PC-3 (cell line): ENCODE measurements at regions of chr17 and their contacts with region 1.

Region 1: DNA sequence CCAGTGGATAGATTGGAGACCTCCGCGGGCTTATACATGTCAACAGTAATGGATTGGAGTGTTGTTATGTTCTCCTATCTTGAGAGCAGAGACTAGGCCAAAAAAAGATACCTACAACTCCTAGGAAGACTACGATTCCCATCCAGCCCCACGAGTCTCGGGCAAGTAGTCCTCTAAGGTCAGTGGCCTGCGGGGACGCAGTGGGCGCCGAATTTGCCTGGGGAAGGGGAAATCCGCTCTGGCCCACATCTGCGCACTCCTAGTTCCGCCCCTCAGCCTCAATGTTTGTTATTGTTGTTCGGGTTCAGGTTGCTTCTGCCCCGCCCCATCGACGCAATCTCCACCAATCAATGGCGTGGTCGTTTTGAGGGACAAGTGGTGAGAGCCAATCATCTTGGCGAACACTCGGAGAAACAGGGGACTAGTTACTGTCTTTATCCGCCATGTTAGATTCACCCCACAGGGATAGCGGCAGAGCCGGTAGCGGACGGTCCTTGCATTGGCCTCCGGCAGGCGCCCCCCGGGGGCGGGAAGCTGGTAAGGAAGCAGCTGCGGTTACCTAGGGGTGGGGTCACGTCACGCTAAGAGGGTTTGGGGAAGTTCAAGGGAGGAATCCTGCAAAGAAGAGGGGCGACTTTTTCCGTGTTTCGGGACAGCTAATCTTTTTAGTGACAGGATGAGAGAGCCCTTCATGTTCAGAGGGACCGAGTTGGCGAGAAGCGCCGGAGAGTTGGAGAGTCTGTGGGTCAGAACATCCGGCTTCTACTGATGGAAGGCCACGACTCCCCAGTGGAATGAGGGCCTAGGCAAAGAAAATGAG is at the start of gene NBR1:
- DNase-seq: peak; percentile 93
- ATAC-seq: peak; percentile 77
- H3K4me3 ChIP-seq: peak within 1 kb of the TSS; percentile 90
- H3K27ac ChIP-seq: peak within 1 kb of the TSS; percentile 73
- H3K4me1 ChIP-seq: peaks cover 11% of the 10 kb centered on the region
- H3K27me3 ChIP-seq: no peaks in the 10 kb centered on the region
- CTCF ChIP-seq: no peak
- total RNA-seq, gene NBR1: 24.1 and 30.0 TPM in 2 replicates

Region 2: DNA sequence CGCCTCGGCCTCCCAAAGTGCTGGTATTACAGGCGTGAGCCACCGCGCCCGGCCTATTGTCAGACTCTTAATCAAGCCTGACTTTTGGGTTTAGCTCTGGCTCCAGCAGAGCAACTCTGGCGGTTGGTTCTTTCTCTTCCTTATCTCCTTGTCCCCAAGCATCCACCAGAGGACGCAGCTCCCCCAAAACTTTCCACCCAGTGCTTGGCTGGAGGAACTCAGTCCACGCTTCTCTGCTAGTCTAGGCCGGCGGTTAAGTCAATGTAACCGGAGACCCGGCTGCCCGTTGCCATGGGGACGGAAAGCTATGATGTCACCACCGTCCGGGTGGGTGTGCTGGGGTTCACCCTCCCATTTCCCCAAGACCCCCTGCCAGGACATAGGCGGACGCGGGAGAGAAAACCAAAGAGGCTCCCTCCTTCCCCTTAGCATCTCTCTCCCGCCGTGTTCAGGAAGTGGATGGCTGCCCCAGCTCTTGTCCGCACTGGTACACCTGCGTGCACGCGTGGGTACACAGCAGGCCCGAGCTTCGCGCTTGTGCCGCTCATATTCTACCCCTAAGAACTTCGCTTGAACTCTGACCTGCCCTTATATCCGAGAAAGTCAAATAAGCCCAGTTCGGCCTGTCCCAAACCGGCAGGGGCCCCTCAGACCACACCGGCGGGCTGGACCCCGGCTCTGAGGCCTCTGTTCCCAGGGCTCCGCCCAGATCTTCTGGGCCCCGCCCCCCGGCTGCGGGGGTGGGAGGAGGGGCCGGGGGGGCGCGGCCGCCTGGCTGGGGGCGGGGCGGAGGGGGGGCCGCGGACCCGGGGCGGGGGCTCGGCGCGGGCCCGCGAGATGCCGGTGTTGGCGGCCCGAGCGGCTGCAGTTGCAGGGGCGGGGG is 146.3 kb before region 1 on chr17 and contains the start of gene RND2:
- CTCF ChIA-PET with region 1: interaction called, 4 read pairs
- POLR2A ChIA-PET with region 1: interaction called, 5 read pairs
- intact Hi-C with region 1: loop called (anchors 2 kb)
- DNase-seq: peak; percentile 85
- ATAC-seq: peak; percentile 65
- H3K4me3 ChIP-seq: peak within 1 kb of the TSS; percentile 61
- H3K27ac ChIP-seq: no peak within 1 kb of the TSS
- H3K4me1 ChIP-seq: peaks cover 5% of the 10 kb centered on the region
- H3K27me3 ChIP-seq: no peaks in the 10 kb centered on the region
- CTCF ChIP-seq: peak; percentile 63
- total RNA-seq, gene RND2: 0.12 and 0.29 TPM in 2 replicates

Region 3: DNA sequence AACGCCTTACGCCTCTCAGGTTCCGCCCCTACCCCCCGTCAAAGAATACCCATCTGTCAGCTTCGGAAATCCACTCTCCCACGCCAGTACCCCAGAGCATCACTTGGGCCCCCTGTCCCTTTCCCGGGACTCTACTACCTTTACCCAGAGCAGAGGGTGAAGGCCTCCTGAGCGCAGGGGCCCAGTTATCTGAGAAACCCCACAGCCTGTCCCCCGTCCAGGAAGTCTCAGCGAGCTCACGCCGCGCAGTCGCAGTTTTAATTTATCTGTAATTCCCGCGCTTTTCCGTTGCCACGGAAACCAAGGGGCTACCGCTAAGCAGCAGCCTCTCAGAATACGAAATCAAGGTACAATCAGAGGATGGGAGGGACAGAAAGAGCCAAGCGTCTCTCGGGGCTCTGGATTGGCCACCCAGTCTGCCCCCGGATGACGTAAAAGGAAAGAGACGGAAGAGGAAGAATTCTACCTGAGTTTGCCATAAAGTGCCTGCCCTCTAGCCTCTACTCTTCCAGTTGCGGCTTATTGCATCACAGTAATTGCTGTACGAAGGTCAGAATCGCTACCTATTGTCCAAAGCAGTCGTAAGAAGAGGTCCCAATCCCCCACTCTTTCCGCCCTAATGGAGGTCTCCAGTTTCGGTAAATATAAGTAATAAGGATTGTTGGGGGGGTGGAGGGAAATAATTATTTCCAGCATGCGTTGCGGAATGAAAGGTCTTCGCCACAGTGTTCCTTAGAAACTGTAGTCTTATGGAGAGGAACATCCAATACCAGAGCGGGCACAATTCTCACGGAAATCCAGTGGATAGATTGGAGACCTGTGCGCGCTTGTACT is 45.6 kb before region 1 on chr17 and contains the start of gene BRCA1:
- CTCF ChIA-PET with region 1: interaction called, 4 read pairs
- POLR2A ChIA-PET with region 1: interaction called, 3 read pairs
- intact Hi-C with region 1: loop called (anchors 1 kb)
- DNase-seq: peak; percentile 98
- ATAC-seq: peak; percentile 98
- H3K4me3 ChIP-seq: peak within 1 kb of the TSS; percentile 83
- H3K27ac ChIP-seq: peak within 1 kb of the TSS; percentile 71
- H3K4me1 ChIP-seq: no peaks in the 10 kb centered on the region; the same call in 1 of the 2 replicates
- H3K27me3 ChIP-seq: no peaks in the 10 kb centered on the region
- CTCF ChIP-seq: no peak
- total RNA-seq, gene BRCA1: 31.8 and 36.3 TPM in 2 replicates

Region 4: DNA sequence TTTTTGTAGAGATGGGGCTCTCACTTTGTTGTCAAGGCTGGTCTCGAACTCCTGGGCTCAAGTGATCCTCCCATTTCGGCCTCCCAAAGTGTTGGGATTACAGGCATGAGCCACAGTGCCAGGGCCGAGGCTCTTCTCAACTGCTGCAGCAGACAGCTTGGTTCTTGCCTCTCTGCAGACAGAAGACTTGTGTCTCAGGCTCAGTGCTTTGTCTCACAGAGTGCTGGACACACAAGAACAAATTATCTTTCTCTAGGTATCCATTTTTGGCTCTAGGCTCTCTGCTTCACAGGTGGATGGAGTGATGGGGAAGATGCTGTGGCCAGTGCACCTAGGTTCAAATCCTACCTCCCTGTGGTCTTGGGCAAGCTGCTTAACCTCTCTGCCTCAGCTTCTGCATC is 143.6 kb after region 1 on chr17:
- CTCF ChIA-PET with region 1: interaction called, 11 read pairs
- POLR2A ChIA-PET with region 1: interaction called, 4 read pairs
- intact Hi-C with region 1: no loop called
- DNase-seq: no peak
- ATAC-seq: no peak
- H3K4me3 ChIP-seq: no peak overlapping the region
- H3K27ac ChIP-seq: no peak overlapping the region
- H3K4me1 ChIP-seq: no peaks in the 10 kb centered on the region
- H3K27me3 ChIP-seq: no peaks in the 10 kb centered on the region
- CTCF ChIP-seq: no peak